HEK293 (cell line): ENCODE measurements at regions of chr6 and their contacts with region 1.

Region 1: DNA sequence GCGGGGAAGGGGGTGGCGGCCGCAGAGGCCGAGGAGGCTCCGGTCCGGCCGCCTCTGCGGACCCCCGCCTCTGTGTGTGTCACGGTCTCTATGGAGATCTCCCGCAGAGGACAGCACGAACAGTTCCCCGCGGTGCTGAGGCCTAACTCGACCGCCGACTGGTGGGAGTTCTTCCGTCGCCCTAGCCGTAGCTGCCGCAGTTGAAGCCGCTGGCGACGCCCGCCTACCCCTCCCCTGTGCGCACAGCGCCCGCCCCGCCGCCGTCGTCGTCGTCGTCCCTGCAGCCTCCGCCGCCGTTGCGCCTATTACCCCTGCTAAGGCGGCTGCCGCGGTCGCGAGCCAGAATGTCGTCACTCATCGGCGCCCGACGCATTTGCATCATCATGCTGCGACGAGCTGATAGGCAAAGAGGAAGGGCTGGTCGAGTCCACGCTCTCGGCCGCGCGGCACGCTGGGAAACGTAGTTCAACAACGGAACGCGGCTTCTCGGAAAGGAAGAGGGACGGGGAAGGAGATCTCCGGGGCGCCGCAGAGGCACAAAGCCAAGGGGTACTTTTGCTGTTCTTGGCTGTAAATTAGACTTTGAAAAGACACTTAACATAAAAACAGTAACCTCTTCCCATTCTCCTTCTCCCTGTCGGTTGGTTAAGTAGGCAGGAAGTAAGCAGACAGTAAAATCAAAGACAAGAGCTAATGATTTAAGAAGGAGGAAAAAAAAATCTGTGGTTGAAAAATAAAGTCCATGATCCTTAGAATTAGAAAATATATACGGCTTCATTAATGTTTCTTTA is at the start of gene NUP153:
- H3K4me3 ChIP-seq: peak within 1 kb of the TSS; percentile 96
- H3K27ac ChIP-seq: peak within 1 kb of the TSS; percentile 95
- H3K4me1 ChIP-seq: peaks cover 6% of the 10 kb centered on the region
- CTCF ChIP-seq: no peak

Region 2: GRCh38 chr6:17691925-17692538 is 14.7 kb before region 1 on chr6:
- CTCF ChIA-PET with region 1: interaction called, 9 read pairs
- POLR2A ChIA-PET with region 1: interaction called, 12 read pairs
- H3K4me3 ChIP-seq: no peak overlapping the region
- H3K27ac ChIP-seq: no peak overlapping the region
- H3K4me1 ChIP-seq: peaks cover 7% of the 10 kb centered on the region; the same call in 1 of the 2 replicates
- CTCF ChIP-seq: no peak

Region 3: GRCh38 chr6:17725083-17725482 is 18.3 kb after region 1 on chr6:
- CTCF ChIA-PET with region 1: interaction called, 4 read pairs
- POLR2A ChIA-PET with region 1: interaction called, 12 read pairs
- H3K4me3 ChIP-seq: no peak overlapping the region
- H3K27ac ChIP-seq: no peak overlapping the region
- H3K4me1 ChIP-seq: no peaks in the 10 kb centered on the region
- CTCF ChIP-seq: no peak

Region 4: DNA sequence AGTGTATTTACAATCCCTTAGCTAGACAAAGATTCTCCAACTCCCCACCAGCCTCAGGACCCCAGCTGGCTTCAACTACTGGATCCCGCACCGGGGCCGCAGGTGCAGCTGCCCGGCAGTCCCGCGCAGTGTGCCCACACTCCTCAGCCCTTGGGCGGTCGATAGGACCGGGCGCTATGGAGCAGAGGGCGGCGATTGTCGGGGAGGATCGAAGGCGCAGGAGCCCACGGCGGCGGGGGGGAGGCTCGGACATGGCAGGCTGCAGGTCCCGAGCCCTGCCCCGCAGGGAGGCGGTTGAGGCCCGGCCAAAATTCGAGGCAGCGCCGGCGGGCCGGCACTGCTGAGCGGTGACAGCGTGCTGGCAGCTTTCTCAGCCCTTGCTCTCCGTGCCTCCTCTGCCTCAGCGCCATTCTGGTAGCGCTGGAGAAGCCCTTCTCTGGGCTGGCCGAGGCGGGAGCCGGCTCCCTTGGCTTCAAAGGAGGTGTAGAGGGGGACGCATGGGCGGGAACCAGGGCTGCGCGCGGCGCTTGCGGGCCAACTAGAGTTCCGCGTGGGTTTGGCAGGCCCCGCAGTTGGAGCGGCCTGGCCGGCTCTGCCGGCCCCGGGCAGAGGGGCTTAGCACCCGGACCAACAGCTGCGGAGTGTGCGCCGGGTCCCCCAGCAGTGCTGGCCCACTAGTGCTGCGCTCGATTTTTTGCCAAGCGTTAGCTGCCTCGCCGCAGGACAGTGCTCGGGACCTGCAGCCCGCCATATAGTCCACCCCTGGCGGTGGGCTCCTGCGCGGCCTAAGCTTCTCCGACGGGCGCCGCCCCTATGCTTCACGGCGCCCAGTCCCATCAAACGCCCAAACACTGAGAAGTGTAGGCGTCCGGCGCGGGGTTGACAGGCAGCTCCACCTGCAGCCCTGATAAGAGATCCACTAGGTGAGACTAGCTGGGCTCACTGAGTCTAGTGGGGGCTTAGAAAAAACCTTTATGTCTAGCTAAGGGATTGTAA is 313.1 kb after region 1 on chr6:
- CTCF ChIA-PET with region 1: no interaction called
- POLR2A ChIA-PET with region 1: no interaction called
- H3K4me3 ChIP-seq: no peak overlapping the region
- H3K27ac ChIP-seq: no peak overlapping the region
- H3K4me1 ChIP-seq: no peaks in the 10 kb centered on the region
- CTCF ChIP-seq: no peak

Region 5: GRCh38 chr6:18359237-18359885 is 652.6 kb after region 1 on chr6:
- CTCF ChIA-PET with region 1: no interaction called
- POLR2A ChIA-PET with region 1: no interaction called
- H3K4me3 ChIP-seq: no peak overlapping the region
- H3K27ac ChIP-seq: no peak overlapping the region
- H3K4me1 ChIP-seq: no peaks in the 10 kb centered on the region
- CTCF ChIP-seq: no peak